Dendritic cell treated with granulocyte-macrophage colony-stimulating factor and Interleukin-4, amounts not matched to agents 40 ng/mL and 50 ng/mL, for 4 days (primary cell): ENCODE measurements at regions of chr7 and their contacts with region 1.

Region 1: GRCh38 chr7:139091677-139091996 is 17.9 kb downstream of the ZC3HAV1 start:
- H3K4me3 Mint-ChIP-seq: no peak overlapping the region
- H3K27ac Mint-ChIP-seq: peak overlapping the region; percentile 44
- H3K4me1 Mint-ChIP-seq: peaks cover 77% of the 10 kb centered on the region
- H3K27me3 Mint-ChIP-seq: no peaks in the 10 kb centered on the region

Region 2: DNA sequence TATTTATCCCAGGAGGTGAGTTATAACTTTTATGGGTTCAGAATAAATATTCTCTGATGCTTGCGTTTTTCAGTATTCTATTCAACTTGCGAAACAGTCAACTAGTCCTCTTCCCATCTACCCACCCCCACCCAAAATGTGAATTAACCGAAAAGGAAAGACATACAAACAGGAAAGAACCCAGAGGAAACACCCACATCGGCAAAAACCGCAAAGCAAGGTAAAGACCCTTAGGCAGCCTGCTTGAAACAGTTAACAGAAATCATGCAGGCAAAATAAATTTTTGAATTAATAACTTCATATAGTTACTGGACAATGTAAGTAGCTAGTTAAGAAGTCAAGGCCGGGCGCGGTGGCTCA is 12.4 kb after region 1 on chr7:
- intact Hi-C with region 1: loop called (anchors 2 kb)
- H3K4me3 Mint-ChIP-seq: peak overlapping the region; percentile 75
- H3K27ac Mint-ChIP-seq: peak overlapping the region; percentile 91
- H3K4me1 Mint-ChIP-seq: peaks cover 41% of the 10 kb centered on the region
- H3K27me3 Mint-ChIP-seq: no peaks in the 10 kb centered on the region